ENCODE measurements at regions of chr1 and their contacts with region 1.

Region 1: DNA sequence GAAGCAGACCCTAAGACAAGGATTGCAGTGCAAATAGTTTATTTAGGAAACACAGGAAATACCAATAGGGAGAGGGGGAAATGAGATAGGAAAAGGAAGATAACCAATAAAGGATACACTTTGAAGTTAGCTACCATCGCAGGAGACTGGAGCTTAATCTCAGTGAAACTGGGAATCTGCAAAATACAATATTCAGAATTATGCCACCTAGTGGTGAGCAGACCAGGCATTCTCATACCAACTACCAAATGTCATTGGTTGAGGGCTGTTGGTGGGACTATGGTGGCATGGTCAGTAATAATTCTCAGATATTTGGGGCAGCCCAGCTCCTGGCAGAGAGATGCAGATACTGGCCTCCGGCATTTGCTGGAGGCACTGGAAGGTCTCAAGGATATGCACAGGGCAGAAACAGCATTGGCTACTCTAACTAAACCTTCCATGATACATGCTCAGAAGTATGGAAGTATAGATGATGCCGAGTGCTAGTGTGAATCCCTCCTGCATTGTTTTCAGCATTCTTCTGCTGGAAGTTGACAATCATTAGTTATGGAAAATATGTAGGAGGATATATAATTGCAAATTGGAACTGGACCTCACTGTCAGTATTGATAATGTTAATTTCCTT is 11.8 kb upstream of the ZFP69B start:
- DNase-seq: no peak
- H3K4me3 ChIP-seq: no peak overlapping the region
- H3K27ac ChIP-seq: no peak overlapping the region
- H3K4me1 ChIP-seq: no peaks in the 10 kb centered on the region
- H3K27me3 ChIP-seq: no peaks in the 10 kb centered on the region
- CTCF ChIP-seq: peak; percentile 18 to 76 (median 53)
- EP300 ChIP-seq: no peak
- POLR2A ChIP-seq: no peak
- RAD21 ChIP-seq: peak; percentile 17 to 44; a peak in 3 of 4 replicates

Region 2: DNA sequence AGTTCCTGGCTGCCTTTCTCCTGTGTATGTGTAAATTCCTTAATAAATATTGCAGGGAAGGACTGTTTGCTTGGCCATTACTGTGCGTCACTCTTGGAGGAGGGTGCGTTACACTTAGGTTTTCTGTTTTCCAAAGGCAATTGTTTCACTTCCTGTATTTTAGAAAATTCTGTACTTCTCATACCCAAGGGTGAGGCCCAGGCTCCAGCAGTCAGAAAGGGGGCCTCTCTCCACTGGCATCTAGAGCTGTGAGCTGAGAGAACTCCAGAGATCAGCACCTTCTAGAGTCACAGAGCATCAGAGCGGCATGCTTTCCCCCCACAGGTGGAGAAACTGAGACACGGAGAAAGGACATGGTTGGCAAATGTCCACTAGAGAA is 15.2 kb before region 1 on chr1:
- CTCF ChIA-PET with region 1: interaction called, 10 read pairs
- POLR2A ChIA-PET with region 1: no interaction called
- DNase-seq: no peak
- H3K4me3 ChIP-seq: no peak overlapping the region
- H3K27ac ChIP-seq: no peak overlapping the region
- H3K4me1 ChIP-seq: peaks cover 0 to 4% (median 4%) of the 10 kb centered on the region in 4 experiments; a peak in 3 of 7 replicates
- H3K27me3 ChIP-seq: no peaks in the 10 kb centered on the region
- CTCF ChIP-seq: no peak
- EP300 ChIP-seq: no peak
- POLR2A ChIP-seq: no peak
- RAD21 ChIP-seq: no peak

Region 3: DNA sequence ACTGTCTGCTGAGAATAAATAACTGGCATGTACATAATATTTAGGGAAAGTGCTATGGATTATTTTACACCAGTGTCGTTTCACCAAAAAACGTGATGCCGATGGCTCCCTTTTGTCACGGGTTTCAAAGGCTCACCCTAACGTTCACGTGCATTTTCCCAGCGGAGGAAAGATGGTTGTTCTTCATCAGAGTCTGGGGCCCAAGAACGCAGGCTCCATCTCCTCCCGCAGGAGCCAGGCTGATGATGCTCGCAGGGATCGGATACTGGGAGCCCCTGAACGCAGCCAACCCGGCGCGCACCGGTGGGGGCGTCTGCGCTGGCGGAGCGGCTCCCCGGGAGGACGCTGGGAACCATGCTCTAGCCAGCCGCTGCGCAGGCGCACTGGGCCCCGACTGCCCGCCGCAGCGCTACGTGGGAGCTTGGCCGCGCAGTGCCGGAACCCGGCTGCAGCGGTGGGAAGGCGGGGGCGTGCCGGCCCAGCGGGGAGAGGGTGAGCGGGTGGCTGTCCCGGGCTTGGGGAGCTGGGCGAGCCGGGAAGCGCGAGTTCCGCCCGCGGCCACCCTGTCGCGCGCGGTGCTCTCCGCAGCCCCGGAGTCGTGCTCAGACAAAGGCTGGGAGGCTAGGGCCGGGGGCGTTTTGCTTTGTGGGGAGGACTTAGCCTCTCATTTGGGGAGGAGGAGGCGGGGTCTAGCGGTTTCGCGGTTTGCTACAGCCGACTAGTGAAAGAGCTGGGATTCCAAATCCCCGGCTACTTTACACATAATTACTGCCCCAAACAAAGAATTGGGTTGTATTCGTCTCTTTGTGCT is 11.4 kb after region 1 on chr1 and contains the start of gene ZFP69B:
- CTCF ChIA-PET with region 1: interaction called, 13 read pairs
- POLR2A ChIA-PET with region 1: interaction called, 7 read pairs
- DNase-seq: peak; percentile 84 to 97
- H3K4me3 ChIP-seq: peak within 1 kb of the TSS; percentile 62 to 76 (median 68)
- H3K27ac ChIP-seq: peak within 1 kb of the TSS; percentile 83
- H3K4me1 ChIP-seq: peaks cover 0 to 8% (median 2%) of the 10 kb centered on the region in 4 experiments; a peak in 5 of 7 replicates
- H3K27me3 ChIP-seq: no peaks in the 10 kb centered on the region
- CTCF ChIP-seq: no peak
- EP300 ChIP-seq: no peak
- POLR2A ChIP-seq: peak; percentile 51 to 68
- RAD21 ChIP-seq: no peak; a peak in 1 of 4 replicates
- total RNA-seq, gene ZFP69B: 6.3 and 8.2 TPM in 2 replicates

Region 4: GRCh38 chr1:40563266-40563665 is 124.8 kb after region 1 on chr1:
- CTCF ChIA-PET with region 1: no interaction called
- POLR2A ChIA-PET with region 1: no interaction called
- DNase-seq: no peak
- H3K4me3 ChIP-seq: no peak overlapping the region
- H3K27ac ChIP-seq: no peak overlapping the region
- H3K4me1 ChIP-seq: no peaks in the 10 kb centered on the region
- H3K27me3 ChIP-seq: no peaks in the 10 kb centered on the region
- CTCF ChIP-seq: no peak
- EP300 ChIP-seq: no peak
- POLR2A ChIP-seq: no peak
- RAD21 ChIP-seq: no peak